Breast epithelium (tissue), 4 donors: ENCODE measurements at regions of chr12 and their contacts with region 1.

Region 1: GRCh38 chr12:118376089-118377020 is at the start of gene SUDS3:
- DNase-seq: peak; percentile 87 to 94
- H3K4me3 ChIP-seq: peak within 1 kb of the TSS; percentile 95 to 100 (median 98)
- H3K27ac ChIP-seq: peak within 1 kb of the TSS; percentile 93 to 98
- H3K4me1 ChIP-seq: peaks cover 0 to 7% of the 10 kb centered on the region in 2 donors
- H3K27me3 ChIP-seq: no peaks in the 10 kb centered on the region
- CTCF ChIP-seq: peak; percentile 97 to 100 (median 99)
- POLR2A ChIP-seq: no peak
- total RNA-seq, gene SUDS3: 38.9 to 66.3 (median 47.2) TPM

Region 2: DNA sequence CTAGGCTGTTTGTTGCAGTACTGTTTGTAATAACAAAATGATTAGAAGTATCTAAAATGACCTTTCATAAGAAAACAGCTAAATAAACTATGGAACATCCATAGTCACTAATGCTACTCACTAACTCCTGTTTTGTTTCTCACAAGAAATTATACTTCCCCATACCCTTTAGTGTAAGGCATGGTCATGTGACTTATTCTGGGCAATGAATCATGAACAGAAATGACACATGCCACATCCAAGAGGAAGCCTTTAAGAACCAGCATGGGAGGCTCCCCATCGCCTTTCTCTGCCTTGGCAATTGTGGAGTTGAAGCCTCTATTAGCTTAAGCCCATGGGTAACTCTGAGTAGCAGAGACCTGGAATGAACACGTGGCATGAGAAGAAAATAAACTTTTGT is 456.9 kb before region 1 on chr12:
- intact Hi-C with region 1: no loop called
- DNase-seq: no peak
- H3K4me3 ChIP-seq: no peak overlapping the region
- H3K27ac ChIP-seq: no peak overlapping the region
- H3K4me1 ChIP-seq: no peaks in the 10 kb centered on the region
- H3K27me3 ChIP-seq: no peaks in the 10 kb centered on the region
- CTCF ChIP-seq: no peak
- POLR2A ChIP-seq: no peak

Region 3: DNA sequence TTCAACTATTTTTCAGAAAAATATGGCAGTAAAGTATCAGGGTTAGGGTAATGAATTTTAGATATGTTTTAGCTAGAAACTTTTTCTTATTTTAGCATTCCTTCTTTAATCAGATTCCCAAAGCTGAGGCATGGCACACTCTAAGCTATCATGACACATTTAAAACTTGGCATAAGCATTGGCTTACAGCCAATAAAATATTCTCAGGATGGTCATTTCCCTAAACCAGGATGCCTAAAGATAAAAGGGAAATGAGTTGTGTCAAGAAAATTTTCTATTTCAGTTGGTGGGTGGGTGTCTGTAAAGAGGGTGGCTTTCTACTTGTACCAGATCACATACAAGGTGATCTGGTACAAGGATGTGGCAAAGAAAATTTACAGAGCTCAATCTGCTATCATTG is 192.7 kb before region 1 on chr12:
- intact Hi-C with region 1: loop called (anchors 2 kb)
- DNase-seq: no peak
- H3K4me3 ChIP-seq: no peak overlapping the region
- H3K27ac ChIP-seq: no peak overlapping the region
- H3K4me1 ChIP-seq: no peaks in the 10 kb centered on the region
- H3K27me3 ChIP-seq: no peaks in the 10 kb centered on the region
- CTCF ChIP-seq: no peak
- POLR2A ChIP-seq: no peak

Region 4: DNA sequence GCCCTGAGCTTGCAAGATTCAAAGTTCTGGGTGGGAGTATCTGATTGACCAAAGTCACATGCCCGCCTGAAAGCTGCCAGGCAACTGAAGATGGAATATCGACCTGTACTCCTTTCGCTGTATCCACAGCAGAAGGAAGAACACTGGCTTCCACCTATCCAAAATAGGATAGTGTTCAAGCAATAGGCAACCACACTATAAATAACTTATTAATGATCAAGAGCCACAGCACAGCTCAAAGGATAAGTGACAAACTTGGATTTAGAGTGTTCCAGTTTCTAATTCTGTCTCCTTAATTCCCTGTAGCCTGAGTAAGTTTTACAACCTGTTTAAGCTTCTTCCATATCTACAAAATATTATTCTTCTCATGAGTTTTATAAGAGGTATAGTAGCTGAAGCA is 93.6 kb before region 1 on chr12:
- intact Hi-C with region 1: loop called (anchors 5 kb)
- DNase-seq: no peak
- H3K4me3 ChIP-seq: no peak overlapping the region
- H3K27ac ChIP-seq: no peak overlapping the region
- H3K4me1 ChIP-seq: no peaks in the 10 kb centered on the region
- H3K27me3 ChIP-seq: no peaks in the 10 kb centered on the region
- CTCF ChIP-seq: no peak
- POLR2A ChIP-seq: no peak

Region 5: DNA sequence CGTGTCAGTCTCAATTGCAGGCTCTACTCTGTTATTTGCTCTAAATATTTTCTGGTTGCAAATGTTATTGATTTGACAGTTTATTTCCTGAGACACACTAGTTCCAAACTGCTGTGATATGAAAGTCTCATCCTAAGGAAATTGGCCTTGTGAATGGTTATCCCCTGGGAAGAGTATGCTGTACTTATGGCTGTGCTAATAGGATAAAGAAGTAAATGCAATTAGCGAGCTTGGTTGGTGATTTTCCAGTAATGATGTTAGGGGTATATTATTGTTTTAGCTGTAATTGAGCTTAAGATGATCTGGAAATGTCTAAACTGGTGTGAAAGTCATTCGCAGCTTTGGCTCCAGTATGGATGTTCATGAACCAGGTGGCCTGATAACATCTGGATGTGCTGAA is 197.9 kb after region 1 on chr12:
- intact Hi-C with region 1: no loop called
- DNase-seq: no peak
- H3K4me3 ChIP-seq: no peak overlapping the region
- H3K27ac ChIP-seq: no peak overlapping the region
- H3K4me1 ChIP-seq: no peaks in the 10 kb centered on the region
- H3K27me3 ChIP-seq: no peaks in the 10 kb centered on the region
- CTCF ChIP-seq: no peak
- POLR2A ChIP-seq: no peak